Activated CD4-positive, alpha-beta memory T cell treated with anti-CD3 and anti-CD28 coated beads for 36 hours (primary cell): ENCODE measurements at regions of chr11 and their contacts with region 1.

Region 1: GRCh38 chr11:41461057-41461681 is 1.7 kb upstream of the LRRC4C start:
- DNase-seq: no peak
- H3K4me3 Mint-ChIP-seq: no peak overlapping the region
- H3K27ac Mint-ChIP-seq: no peak overlapping the region
- H3K4me1 Mint-ChIP-seq: peaks cover 5% of the 10 kb centered on the region
- H3K27me3 Mint-ChIP-seq: peaks cover 4% of the 10 kb centered on the region

Region 2: GRCh38 chr11:42524534-42525227 is 1063.5 kb after region 1 on chr11:
- CTCF ChIA-PET with region 1: no interaction called
- POLR2A ChIA-PET with region 1: no interaction called
- intact Hi-C with region 1: loop called (anchors 10 kb)
- DNase-seq: peak; percentile 14
- H3K4me3 Mint-ChIP-seq: no peak overlapping the region
- H3K27ac Mint-ChIP-seq: no peak overlapping the region
- H3K4me1 Mint-ChIP-seq: no peaks in the 10 kb centered on the region
- H3K27me3 Mint-ChIP-seq: no peaks in the 10 kb centered on the region

Region 3: GRCh38 chr11:43282607-43283440 is 1821.7 kb after region 1 on chr11:
- CTCF ChIA-PET with region 1: interaction called, 15 read pairs
- POLR2A ChIA-PET with region 1: no interaction called
- intact Hi-C with region 1: loop called (anchors 5 kb)
- DNase-seq: peak; percentile 49
- H3K4me3 Mint-ChIP-seq: no peak overlapping the region
- H3K27ac Mint-ChIP-seq: no peak overlapping the region
- H3K4me1 Mint-ChIP-seq: no peaks in the 10 kb centered on the region
- H3K27me3 Mint-ChIP-seq: peaks cover 21% of the 10 kb centered on the region